ENCODE measurements at regions of chr14 and their contacts with region 1.

Region 1: GRCh38 chr14:50954811-50955372 is 10.6 kb upstream of the PYGL start:
- DNase-seq: no peak
- H3K4me3 ChIP-seq: no peak overlapping the region
- H3K27me3 ChIP-seq: no peaks in the 10 kb centered on the region
- CTCF ChIP-seq: peak; percentile 70

Region 2: DNA sequence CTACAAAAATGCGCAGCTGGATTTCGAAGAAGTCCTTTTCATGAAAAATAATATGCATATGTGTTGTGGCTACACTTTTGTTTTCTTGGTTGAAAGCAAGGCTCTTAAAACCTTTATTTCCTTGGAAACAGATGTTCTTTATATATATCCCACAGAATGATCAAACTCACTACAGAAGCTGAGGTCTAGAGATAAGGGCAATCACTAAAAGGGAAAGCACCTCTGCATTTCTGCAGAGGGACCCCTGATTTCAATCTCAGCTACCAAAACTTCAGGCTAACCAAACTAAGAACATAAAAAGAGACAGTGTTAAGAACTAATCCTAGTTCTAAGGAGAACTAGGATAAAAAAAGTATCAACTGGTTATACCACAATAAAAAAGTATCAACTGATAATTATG is 492.8 kb before region 1 on chr14:
- CTCF ChIA-PET with region 1: no interaction called
- POLR2A ChIA-PET with region 1: no interaction called
- DNase-seq: no peak
- H3K4me3 ChIP-seq: no peak overlapping the region
- H3K27me3 ChIP-seq: no peaks in the 10 kb centered on the region
- CTCF ChIP-seq: no peak

Region 3: DNA sequence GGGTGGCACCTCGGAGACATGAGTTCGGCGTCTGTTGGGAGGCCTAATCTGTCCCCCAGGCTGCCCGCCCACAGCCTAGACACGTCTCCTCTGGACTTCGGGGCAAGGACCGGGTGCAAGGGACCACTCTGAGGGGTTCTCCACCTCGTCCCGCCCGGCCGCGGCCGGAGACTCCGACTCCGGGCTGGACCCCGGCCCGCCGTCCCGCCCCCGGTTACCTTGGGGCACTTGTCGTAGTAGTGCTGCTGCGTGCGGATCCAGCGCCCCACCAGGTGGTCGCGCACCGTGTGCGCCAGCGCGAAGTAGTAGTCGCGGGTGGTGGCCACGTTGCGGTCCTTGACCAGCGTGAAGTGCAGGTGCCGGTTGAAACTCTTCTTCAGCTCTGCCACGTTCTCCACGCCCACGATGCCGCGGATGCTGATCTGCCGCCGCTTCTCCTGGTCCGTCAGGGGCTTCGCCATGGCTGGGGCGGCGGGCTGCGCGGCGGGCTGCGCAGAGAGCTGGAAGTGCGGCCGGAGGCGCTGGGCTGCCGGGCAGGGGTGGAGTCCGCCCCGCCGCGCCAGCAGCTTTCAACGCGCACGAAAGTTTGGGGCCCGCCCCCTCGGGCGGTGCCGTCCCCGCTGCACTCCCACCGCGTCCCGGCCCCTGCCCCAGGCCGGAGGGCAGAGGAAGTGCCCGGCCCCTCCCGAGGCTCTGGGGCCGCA is 10.8 kb before region 1 on chr14 and contains the start of gene PYGL:
- CTCF ChIA-PET with region 1: interaction called, 13 read pairs
- POLR2A ChIA-PET with region 1: no interaction called
- DNase-seq: no peak
- H3K4me3 ChIP-seq: peak within 1 kb of the TSS; percentile 84
- H3K27me3 ChIP-seq: no peaks in the 10 kb centered on the region
- CTCF ChIP-seq: no peak
- polyA plus RNA-seq, gene PYGL: 36.0 and 36.4 TPM in 2 replicates

Region 4: DNA sequence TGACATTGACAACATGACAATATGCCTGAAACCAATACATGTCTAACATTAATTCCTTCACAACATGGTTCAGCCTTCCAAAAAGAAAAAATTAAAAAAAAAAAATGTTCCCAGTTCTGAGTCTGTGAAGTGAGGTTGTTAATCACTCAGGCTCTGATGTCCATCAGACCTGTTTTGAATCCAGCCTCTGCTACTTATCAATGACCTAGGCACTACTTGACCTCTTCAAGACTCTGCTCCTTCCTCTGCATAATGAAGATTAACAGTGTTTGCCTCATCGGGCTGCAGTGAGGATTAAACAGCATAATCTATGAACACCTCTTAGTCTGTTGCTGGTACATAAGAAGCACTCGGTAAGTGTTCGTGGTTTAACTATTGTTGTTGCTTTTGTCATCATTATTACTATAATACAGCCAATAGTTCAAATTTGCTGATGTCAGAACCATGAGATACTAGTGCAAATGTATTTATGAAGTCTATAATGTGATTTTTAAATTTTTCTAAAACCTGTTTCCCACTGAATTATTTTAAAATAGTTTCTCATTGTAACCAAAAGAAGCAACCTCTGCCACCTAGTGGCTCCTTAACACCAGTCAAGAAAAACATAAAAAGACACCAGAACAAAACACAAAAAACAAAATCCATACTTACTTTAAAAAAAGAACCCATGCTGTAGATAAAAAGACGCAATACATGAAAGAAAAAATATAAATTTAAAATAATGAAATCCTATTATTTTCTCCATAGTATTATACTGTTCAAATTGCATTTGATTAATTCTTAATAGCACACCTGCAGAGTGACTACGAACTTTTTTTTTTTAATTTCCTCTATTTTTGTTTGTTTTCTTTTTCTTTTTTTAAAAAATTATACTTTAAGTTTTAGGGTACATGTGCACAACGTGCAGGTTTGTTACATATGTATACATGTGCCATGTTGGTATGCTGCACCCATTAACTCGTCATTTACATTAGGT is 264.9 kb after region 1 on chr14:
- CTCF ChIA-PET with region 1: interaction called, 21 read pairs
- POLR2A ChIA-PET with region 1: no interaction called
- DNase-seq: no peak
- H3K4me3 ChIP-seq: no peak overlapping the region
- H3K27me3 ChIP-seq: no peaks in the 10 kb centered on the region
- CTCF ChIP-seq: peak; percentile 68

Region 5: DNA sequence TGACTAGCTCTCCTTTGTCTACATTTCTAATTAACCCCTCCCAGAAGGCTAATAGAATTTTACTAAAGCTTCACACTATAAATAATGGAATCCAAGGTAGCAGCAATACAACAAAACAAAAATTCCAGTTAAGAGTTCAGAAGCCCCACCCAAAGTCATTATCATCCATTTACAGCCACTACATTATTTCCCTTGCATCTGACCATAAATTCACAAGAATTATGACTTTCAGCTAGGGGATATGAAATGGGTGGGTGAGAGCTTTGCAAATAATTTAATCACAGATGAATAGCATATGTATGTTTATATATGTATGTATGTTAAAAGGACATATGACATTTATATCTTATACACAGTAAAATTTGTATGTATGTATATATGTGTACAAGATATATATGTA is 1247.3 kb after region 1 on chr14:
- CTCF ChIA-PET with region 1: no interaction called
- POLR2A ChIA-PET with region 1: no interaction called
- DNase-seq: no peak
- H3K4me3 ChIP-seq: no peak overlapping the region
- H3K27me3 ChIP-seq: no peaks in the 10 kb centered on the region
- CTCF ChIP-seq: no peak

Measured in BJ (cell line).